ENCODE measurements at regions of chr18 and their contacts with region 1.

Region 1: DNA sequence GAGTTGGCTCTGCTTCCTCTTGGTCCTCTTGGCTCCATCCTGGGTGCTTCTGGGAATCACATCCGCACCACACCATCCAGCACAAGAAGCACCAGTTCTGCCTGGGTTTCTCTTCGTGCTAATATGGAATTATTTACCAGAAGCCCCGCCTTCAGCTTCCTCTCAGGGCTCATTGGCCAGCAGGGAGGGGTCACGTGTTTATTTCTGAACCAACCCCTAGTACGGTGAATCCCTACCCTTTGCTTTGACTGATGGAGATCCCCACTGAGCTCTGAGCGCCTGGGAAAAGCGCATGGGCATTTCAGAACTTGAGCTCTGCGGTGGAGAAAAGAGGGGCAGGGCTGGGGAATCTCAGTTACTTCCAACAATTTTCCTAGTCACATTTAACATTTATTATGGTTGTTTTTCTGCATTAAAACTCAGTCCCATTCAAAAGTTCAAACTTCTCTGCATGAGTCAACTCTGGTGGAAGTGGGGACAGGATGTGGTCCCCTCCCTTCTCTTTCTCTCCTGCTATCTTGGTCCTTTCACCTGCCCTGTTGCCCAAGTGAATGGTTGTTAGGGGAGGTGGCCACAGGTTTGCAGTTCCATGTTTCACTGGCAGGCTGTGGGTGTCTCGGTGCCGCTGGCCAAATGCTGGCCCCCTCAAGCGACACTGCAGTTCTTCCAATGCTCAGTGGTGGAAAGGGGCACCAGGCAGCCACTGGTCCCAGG is 76.4 kb upstream of the TTC39C start:
- DNase-seq: peak; percentile 42
- CTCF ChIP-seq: no peak

Region 2: DNA sequence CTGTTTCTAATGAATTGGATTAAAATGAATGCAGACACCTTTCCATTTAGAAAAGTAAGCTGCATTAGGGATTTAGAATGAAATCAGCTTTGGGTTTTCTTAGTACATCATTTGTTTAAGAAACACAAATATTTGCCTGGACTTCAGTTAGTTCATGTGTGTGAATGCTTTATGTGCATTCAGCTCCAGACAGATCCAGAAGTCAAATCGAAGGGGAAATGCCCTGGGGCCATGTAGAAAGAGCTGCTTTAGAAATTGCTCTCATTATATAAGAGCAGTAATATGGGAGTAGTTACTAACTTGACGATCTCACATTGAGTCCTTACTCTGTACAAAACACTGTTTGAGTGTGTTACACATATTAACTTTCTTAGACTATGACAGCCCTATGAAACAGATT is 11.6 kb before region 1 on chr18:
- CTCF ChIA-PET with region 1: interaction called, 12 read pairs
- POLR2A ChIA-PET with region 1: no interaction called
- DNase-seq: no peak
- CTCF ChIP-seq: no peak

Region 3: DNA sequence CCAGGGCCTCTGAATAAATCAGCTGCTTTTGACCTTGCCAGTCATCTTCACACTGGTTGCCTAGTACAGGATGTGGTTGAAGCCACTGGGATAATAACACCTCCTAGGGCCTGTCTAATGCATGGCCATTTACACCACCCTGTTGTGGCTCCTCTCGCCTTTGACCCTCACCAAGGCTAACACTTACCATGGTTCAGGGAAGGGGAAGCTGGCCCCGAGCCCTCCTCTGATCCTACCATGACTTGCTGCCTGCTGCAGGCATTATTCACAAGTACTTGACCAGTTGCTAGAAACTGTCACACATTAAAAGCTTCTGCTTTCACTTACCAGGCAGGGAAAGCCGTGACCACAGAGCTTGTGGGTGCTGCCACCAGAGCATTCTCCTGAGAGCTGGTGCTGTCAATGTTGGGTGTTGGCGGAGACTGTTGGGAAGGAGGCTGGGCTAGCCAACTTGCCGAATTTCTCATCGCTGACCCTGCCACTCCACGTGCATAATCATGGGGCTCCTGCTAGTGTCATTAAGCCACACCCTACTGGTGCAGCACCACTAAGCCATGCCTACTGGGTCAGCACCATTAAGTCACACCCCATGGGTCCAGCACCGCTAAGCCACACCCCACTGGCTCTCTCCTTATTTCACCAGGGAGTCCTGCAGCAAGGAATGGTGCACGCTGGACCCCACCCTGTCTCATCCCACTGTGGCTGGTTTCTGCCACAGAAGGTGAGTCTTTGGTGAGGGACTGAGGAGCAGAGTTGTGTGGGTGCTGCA is 29.3 kb after region 1 on chr18:
- CTCF ChIA-PET with region 1: no interaction called
- POLR2A ChIA-PET with region 1: no interaction called
- DNase-seq: no peak
- CTCF ChIP-seq: no peak

Region 4: DNA sequence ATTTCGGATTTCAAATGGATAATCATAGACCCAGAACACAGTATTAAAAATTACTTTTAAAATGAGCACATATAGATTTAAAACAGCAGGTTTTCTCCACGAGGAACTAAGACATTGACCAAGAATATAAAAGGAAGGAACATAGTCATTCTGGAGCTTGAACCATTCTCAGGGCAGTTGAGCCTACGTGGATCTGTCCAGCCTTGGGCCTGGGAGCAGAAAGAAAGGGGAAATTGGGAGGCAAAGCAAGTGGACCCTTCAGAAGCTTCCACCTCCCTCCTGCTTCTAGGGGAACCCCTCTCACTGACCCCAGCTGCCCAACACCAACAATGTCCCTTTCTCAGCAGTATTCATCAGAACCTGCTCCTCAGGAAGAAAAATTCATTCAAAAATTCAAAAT is 44.9 kb after region 1 on chr18:
- CTCF ChIA-PET with region 1: no interaction called
- POLR2A ChIA-PET with region 1: no interaction called
- DNase-seq: no peak
- CTCF ChIP-seq: no peak

Region 5: DNA sequence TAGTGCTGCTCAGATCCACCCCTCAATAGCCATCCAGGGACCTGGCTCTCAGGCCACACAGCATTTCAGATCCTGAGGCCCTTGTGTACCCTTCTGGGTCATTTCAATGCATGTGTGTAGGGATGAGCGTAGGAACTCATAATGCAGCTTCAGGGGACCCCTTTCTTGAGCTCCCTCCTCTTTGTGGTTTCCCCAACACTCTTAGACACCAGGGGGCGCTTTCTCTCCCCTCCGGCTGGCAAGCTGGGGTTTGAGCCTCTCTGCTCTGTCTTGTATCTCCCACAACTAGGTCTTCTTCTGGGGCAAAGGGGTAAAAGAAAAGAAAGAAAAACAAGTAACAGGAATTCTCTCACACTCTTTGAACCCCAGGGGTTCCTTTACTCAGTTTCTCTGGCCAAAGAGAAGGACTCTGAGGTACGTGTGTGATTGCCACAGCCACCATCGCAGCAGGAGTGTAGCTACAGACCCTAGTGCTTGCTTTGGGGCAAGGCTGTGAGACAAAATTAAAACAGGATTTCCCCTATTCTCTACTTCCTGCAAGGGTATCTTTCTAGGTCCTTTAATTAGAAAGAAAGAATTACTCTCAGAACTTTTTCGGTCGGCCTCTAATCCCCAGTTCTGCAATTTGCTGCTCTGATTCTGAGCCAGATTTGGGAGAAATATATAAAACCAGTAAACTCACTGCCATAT is 238.7 kb after region 1 on chr18:
- CTCF ChIA-PET with region 1: no interaction called
- POLR2A ChIA-PET with region 1: no interaction called
- DNase-seq: peak; percentile 66
- CTCF ChIP-seq: peak; percentile 79